Activated CD4-positive, alpha-beta memory T cell treated with anti-CD3 and anti-CD28 coated beads for 36 hours (primary cell): ENCODE measurements at regions of chr19 and their contacts with region 1.

Region 1: GRCh38 chr19:13117772-13118423 is at the start of gene NACC1:
- DNase-seq: peak; percentile 94
- H3K4me3 Mint-ChIP-seq: peak within 1 kb of the TSS; percentile 86
- H3K27ac Mint-ChIP-seq: peak within 1 kb of the TSS; percentile 93
- H3K4me1 Mint-ChIP-seq: peaks cover 51% of the 10 kb centered on the region
- H3K27me3 Mint-ChIP-seq: no peaks in the 10 kb centered on the region
- total RNA-seq, gene NACC1: 89.8 to 90.9 TPM

Region 2: DNA sequence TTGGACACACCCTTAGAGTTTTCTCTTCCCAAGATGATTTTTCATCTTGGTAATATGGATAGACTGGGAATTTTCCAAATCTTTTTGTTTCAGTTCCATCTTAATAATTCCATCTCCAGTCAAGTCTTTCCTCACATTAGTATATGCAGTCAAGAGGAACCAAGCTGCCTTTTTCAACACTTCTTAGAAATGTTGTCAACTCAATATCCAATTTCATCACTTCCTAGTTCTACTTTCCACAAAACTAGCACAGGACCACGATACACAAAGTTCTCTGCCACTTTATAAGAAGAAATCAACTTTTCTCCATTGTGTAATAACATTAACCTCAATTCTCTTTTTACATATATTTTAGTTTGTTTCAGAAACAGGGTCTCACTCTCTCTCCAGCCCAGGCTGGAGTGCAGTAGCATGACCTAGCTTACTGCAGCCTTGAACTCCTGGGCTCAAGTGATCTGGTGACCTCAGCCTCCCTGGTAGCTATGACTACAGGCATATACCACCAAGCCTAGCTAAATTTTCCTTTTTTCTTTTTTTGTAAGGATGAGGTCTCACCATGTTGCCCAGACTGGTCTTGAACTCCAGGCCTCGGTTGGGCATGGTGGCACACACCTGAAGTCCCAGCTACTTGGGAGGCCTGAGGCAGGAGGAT is 692.5 kb before region 1 on chr19:
- CTCF ChIA-PET with region 1: no interaction called
- POLR2A ChIA-PET with region 1: no interaction called
- intact Hi-C with region 1: no loop called
- DNase-seq: no peak
- H3K4me3 Mint-ChIP-seq: no peak overlapping the region
- H3K27ac Mint-ChIP-seq: no peak overlapping the region
- H3K4me1 Mint-ChIP-seq: no peaks in the 10 kb centered on the region
- H3K27me3 Mint-ChIP-seq: no peaks in the 10 kb centered on the region

Region 3: DNA sequence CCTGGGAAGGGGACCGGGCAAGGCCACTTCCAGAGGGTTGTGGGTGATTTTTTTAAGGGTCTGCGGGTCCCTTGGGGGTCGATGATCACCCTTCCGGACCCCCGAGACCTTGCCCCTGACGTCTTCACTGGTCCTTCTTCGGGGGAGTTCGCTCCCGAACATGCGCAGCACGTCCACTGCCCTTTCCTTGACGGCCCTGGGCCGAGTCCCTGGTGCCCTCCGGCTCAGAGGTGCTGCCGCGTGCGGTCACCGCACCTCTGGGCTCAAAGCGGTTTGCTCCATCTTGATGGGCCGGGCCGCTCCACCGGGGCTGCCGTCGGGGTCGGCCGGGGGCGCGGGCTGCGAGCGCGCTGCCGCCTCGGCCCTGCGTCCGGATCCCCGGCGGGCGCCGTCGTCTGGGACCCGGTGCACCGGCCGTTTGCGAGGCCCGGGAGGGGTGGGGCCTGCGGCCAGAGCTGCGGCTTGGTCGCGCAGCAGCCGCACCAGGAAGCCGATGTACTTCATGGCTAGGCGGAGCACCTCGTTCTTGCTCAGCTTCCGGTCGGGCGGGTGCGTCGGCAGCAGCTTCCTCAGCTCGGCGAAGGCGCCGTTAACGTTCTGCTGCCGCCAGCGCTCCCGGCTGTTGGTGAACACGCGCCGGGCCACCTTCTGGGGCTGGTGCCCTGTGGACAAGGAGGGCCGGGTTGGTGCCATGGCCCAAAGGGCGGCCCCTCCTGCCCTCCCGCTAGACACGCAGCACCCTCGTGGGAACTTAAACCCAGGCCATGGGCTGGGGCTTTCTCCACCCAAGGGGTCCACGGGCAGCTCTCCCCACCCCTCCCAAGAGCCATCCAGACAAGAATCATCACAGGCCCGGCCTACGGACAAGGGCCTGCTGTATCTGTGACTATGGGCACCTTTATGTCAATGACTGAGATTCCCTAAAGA is 18.6 kb before region 1 on chr19:
- CTCF ChIA-PET with region 1: interaction called, 16 read pairs
- POLR2A ChIA-PET with region 1: interaction called, 13 read pairs
- intact Hi-C with region 1: loop called (anchors 1 kb)
- DNase-seq: peak; percentile 88
- H3K4me3 Mint-ChIP-seq: peak overlapping the region; percentile 64
- H3K27ac Mint-ChIP-seq: peak overlapping the region; percentile 90
- H3K4me1 Mint-ChIP-seq: peaks cover 58% of the 10 kb centered on the region
- H3K27me3 Mint-ChIP-seq: peaks cover 22% of the 10 kb centered on the region

Region 4: DNA sequence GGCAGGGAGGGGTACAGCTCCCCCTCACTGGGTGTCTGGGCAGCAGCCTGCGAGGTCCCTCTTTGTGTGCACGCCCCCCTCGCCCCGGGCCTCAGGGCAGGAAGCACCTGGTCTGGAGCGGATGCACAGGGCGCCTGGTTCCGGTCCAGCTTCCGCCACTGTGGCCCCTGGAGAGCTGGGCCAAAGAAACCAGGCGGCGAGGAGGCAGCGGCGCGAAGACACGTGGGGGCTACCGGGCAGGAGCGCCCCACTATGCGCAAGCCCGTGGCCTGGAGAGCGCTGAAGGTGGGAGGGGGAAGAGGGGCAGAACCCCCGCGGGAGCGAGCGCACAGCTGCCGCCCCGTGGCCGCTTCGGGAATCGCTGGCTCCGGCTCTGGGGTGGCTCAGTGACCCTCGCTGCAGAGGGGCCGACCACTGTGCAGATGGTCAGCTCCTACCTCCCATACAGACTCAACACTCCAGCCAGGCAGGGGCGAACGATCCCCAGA is 13.5 kb before region 1 on chr19:
- CTCF ChIA-PET with region 1: interaction called, 16 read pairs
- POLR2A ChIA-PET with region 1: interaction called, 13 read pairs
- intact Hi-C with region 1: loop called (anchors 1 kb)
- DNase-seq: peak; percentile 81
- H3K4me3 Mint-ChIP-seq: peak overlapping the region; percentile 92
- H3K27ac Mint-ChIP-seq: peak overlapping the region; percentile 94
- H3K4me1 Mint-ChIP-seq: peaks cover 32% of the 10 kb centered on the region
- H3K27me3 Mint-ChIP-seq: no peaks in the 10 kb centered on the region

Region 5: GRCh38 chr19:13132471-13133180 is 14.7 kb after region 1 on chr19:
- CTCF ChIA-PET with region 1: interaction called, 4 read pairs
- POLR2A ChIA-PET with region 1: interaction called, 19 read pairs
- intact Hi-C with region 1: loop called (anchors 1 kb)
- DNase-seq: peak; percentile 83
- H3K4me3 Mint-ChIP-seq: peak overlapping the region; percentile 60
- H3K27ac Mint-ChIP-seq: peak overlapping the region; percentile 96
- H3K4me1 Mint-ChIP-seq: peaks cover 46% of the 10 kb centered on the region
- H3K27me3 Mint-ChIP-seq: no peaks in the 10 kb centered on the region

Region 6: DNA sequence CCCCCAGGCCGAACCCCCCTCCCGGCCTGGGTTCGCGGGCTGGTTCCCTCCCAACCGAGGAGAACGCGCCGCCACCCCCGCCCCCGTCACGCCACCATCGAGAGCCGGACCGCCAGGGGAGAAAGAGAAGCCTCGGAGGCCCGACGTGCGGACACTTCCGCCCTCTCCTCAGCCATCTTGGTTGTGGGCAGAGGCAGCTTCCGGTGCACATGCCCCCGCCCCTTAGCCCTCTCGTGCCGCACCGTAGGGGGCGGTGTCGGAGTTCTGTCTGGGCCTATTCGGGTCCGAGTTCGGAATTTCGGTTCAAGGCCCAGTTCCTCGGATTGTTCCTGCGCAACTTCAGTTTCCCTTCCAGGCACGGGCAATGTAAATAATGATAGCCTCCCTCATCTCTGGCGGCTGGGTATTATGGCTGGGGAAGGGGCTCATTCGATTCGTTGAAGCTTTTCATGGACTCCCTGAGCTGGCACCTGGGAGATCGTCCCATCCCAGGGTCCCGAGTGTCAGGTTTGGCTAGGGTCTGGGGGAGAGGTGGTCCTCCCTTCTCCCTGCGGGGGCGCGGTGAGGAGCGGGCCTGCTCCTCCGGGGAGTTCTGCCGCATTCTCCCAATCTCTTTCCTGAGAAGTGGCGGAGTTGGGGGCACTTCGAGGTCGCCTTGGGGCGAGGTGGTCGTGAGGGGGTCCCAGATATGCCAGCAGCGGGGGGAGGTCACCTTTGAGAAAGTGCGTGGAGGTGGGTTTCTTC is 32.5 kb after region 1 on chr19 and contains the starts of genes IER2 and STX10:
- CTCF ChIA-PET with region 1: interaction called, 12 read pairs
- POLR2A ChIA-PET with region 1: interaction called, 38 read pairs
- intact Hi-C with region 1: loop called (anchors 1 kb)
- DNase-seq: peak; percentile 96
- H3K4me3 Mint-ChIP-seq: peak within 1 kb of the TSS; percentile 99
- H3K27ac Mint-ChIP-seq: peak within 1 kb of the TSS; percentile 97
- H3K4me1 Mint-ChIP-seq: peaks cover 23% of the 10 kb centered on the region
- H3K27me3 Mint-ChIP-seq: peaks cover 3% of the 10 kb centered on the region
- total RNA-seq, gene IER2: 129 to 137 TPM
- total RNA-seq, gene STX10: 65.5 to 66.3 TPM

Region 7: DNA sequence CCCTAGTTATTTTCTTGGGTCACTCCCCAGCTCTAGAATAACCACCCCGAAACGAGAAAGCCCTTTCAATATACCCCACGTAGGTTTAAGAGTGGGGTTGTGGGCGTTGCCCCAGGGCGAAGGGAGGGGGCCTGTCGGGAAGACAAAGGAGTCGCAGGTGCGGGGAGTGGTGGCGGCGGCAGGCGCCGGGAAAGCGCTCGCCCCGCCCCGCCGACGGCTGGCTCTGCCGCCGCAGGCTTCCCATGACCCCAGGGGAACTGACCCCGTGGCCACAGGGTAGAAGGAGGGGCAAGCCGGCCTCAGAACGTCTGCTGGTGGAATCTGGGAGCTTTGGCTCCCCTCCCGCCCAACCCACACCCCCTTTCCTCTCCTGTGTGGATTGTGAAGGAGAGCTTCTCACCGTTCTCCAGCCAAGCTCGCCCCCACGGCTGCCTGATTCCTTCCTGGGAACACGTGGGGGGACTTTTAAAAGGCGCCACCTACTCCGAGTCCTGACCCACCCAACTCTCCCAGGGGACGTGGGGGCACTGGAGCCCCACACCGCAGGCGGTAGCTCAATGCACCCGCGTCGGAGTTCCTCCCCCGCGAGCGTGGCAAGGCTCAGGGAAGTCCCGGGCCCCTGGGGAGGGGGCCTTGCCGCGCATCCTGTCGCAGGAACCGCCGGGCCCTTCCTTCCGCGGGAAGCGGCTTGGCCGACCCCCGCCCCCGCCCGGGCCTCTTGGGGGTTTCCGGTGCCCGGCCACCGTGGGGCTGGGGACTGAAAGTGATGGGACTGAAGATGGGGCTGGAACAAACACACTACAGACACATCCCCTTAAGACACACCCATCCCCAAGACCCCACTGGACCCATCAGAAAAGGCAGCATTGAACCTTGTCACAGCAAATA is 37.8 kb after region 1 on chr19:
- CTCF ChIA-PET with region 1: interaction called, 12 read pairs
- POLR2A ChIA-PET with region 1: interaction called, 38 read pairs
- intact Hi-C with region 1: loop called (anchors 1 kb)
- DNase-seq: peak; percentile 84
- H3K4me3 Mint-ChIP-seq: peak overlapping the region; percentile 99
- H3K27ac Mint-ChIP-seq: peak overlapping the region; percentile 97
- H3K4me1 Mint-ChIP-seq: peaks cover 41% of the 10 kb centered on the region
- H3K27me3 Mint-ChIP-seq: peaks cover 3% of the 10 kb centered on the region

Region 8: GRCh38 chr19:13212759-13213330 is 94.9 kb after region 1 on chr19:
- CTCF ChIA-PET with region 1: no interaction called
- POLR2A ChIA-PET with region 1: no interaction called
- intact Hi-C with region 1: loop called (anchors 5 kb)
- DNase-seq: peak; percentile 85
- H3K4me3 Mint-ChIP-seq: no peak overlapping the region
- H3K27ac Mint-ChIP-seq: peak overlapping the region; percentile 1
- H3K4me1 Mint-ChIP-seq: peaks cover 21% of the 10 kb centered on the region
- H3K27me3 Mint-ChIP-seq: no peaks in the 10 kb centered on the region